ENCODE measurements at regions of chr1 and their contacts with region 1.

Region 1: GRCh38 chr1:210373885-210374599 is 45.3 kb downstream of the HHAT start:
- DNase-seq: peak; percentile 98
- ATAC-seq: peak; percentile 87
- H3K4me3 ChIP-seq: peak overlapping the region in 2 of 3 experiments; percentile 11 to 49; a peak in 1 of 6 replicates
- H3K27ac ChIP-seq: peak overlapping the region; percentile 98
- H3K4me1 ChIP-seq: peaks cover 55% of the 10 kb centered on the region
- H3K27me3 ChIP-seq: no peaks in the 10 kb centered on the region
- CTCF ChIP-seq: peak; percentile 87
- EP300 ChIP-seq: peak; percentile 83 to 91
- POLR2A ChIP-seq: peak; percentile 85 to 100
- RAD21 ChIP-seq: peak; percentile 74

Region 2: GRCh38 chr1:210328746-210329503 is 45.1 kb before region 1 on chr1 and contains the start of gene HHAT:
- CTCF ChIA-PET with region 1: no interaction called
- POLR2A ChIA-PET with region 1: interaction called, 19 read pairs
- in situ Hi-C with region 1: no loop called
- intact Hi-C with region 1: no loop called
- DNase-seq: peak; percentile 49
- ATAC-seq: peak; percentile 94
- H3K4me3 ChIP-seq: peak within 1 kb of the TSS; percentile 69 to 85 (median 73)
- H3K27ac ChIP-seq: peak within 1 kb of the TSS; percentile 73
- H3K4me1 ChIP-seq: peaks cover 19% of the 10 kb centered on the region
- H3K27me3 ChIP-seq: no peaks in the 10 kb centered on the region; a peak in 1 of 5 replicates
- CTCF ChIP-seq: peak; percentile 26; the same call in 1 of the 2 replicates
- EP300 ChIP-seq: no peak
- POLR2A ChIP-seq: peak; percentile 61 to 67
- RAD21 ChIP-seq: no peak
- total RNA-seq, gene HHAT: 2.9 and 4.9 TPM in 2 replicates

Region 3: DNA sequence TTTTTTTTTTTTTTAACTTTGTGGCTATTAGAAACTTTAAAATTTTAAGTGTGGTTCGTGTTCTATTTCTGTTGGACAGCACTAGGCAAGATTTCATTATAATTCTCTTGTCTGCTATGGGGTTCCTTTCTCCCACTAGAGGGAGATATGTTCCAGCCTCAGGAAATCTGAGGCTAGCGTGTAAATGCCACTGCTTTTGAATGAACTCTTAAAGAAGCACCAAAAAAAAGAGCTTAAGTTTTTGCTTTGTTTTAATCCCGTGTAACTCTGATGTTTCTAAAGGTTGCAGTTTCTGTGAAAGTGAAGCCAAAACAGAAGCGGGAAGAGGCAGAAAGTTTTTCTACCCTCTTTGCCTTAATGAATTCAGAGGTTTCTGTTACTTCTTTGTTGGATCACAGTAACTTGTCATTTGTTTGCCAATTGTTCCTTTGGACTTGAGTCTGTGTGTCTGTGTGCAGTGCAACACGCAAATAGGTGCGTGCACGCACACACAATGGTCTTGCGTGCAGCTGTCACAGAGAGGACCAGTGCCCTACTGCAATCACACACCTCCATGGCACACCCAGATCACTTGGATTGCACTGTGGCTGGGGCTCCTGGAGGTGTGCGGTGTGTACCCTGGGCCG is 13.1 kb before region 1 on chr1:
- CTCF ChIA-PET with region 1: interaction called, 10 read pairs
- POLR2A ChIA-PET with region 1: interaction called, 16 read pairs
- in situ Hi-C with region 1: no loop called
- intact Hi-C with region 1: no loop called
- DNase-seq: peak; percentile 52
- ATAC-seq: peak; percentile 93
- H3K4me3 ChIP-seq: peak overlapping the region; percentile 3 to 35 (median 8); a peak in 3 of 6 replicates
- H3K27ac ChIP-seq: no peak overlapping the region
- H3K4me1 ChIP-seq: peaks cover 38% of the 10 kb centered on the region
- H3K27me3 ChIP-seq: no peaks in the 10 kb centered on the region
- CTCF ChIP-seq: peak; percentile 70
- EP300 ChIP-seq: no peak
- POLR2A ChIP-seq: no peak
- RAD21 ChIP-seq: peak; percentile 42; the same call in 1 of the 2 replicates

Region 4: DNA sequence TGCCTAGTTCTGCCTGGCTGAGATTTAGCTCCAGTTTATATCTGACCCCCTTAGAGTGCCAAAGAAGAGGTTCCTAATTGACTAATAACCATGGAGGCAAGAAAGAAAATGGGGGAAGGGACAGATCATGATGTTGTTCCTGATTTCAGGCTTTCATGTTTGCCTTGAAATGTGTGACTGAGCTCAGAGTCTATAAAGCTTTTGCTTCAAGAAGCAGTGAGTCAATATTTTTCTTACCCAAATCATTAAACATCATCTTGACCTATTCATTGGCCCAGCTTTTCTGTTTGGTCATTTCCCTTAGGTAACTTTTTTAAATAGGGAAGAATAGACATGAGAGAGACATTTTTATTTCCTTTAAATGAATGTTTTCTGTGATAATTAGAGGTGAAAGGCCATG is 10.6 kb after region 1 on chr1:
- CTCF ChIA-PET with region 1: no interaction called
- POLR2A ChIA-PET with region 1: interaction called, 53 read pairs
- in situ Hi-C with region 1: no loop called
- intact Hi-C with region 1: no loop called
- DNase-seq: no peak
- ATAC-seq: no peak; the same call in 2 of the 3 replicates
- H3K4me3 ChIP-seq: no peak overlapping the region
- H3K27ac ChIP-seq: peak overlapping the region; percentile 23
- H3K4me1 ChIP-seq: peaks cover 33% of the 10 kb centered on the region
- H3K27me3 ChIP-seq: no peaks in the 10 kb centered on the region
- CTCF ChIP-seq: no peak
- EP300 ChIP-seq: no peak
- POLR2A ChIP-seq: no peak
- RAD21 ChIP-seq: no peak

Region 5: DNA sequence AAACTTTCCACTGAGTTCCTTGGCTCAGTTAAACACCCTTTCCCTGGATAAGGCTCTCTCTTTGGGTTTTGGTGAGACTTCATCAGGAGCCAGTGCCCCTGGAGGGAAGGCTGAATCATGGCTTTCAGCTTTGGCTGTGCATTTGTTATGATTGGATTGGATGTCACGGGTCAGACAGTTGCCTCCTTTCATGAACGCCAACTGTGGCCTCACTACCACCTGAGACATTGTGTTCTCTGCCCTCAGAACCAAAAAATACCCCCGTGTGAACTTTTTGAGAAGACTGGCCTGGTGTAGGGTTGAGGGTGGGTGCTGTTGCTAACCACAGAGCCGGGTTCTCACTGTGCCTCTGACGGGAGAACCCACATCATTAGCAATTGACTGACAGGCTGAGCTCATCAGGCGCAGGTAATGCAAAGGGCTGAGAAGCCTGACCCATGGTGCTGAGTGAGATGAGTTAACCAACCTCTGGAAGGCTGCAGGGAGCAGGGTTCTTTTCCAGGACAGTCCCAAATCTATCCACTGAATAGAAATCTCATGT is 20.3 kb after region 1 on chr1:
- CTCF ChIA-PET with region 1: interaction called, 31 read pairs
- POLR2A ChIA-PET with region 1: interaction called, 21 read pairs
- in situ Hi-C with region 1: no loop called
- intact Hi-C with region 1: loop called (anchors 1 kb)
- DNase-seq: no peak
- ATAC-seq: no peak
- H3K4me3 ChIP-seq: no peak overlapping the region
- H3K27ac ChIP-seq: no peak overlapping the region
- H3K4me1 ChIP-seq: peaks cover 29% of the 10 kb centered on the region
- H3K27me3 ChIP-seq: no peaks in the 10 kb centered on the region
- CTCF ChIP-seq: no peak
- EP300 ChIP-seq: no peak
- POLR2A ChIP-seq: no peak
- RAD21 ChIP-seq: no peak

Region 6: DNA sequence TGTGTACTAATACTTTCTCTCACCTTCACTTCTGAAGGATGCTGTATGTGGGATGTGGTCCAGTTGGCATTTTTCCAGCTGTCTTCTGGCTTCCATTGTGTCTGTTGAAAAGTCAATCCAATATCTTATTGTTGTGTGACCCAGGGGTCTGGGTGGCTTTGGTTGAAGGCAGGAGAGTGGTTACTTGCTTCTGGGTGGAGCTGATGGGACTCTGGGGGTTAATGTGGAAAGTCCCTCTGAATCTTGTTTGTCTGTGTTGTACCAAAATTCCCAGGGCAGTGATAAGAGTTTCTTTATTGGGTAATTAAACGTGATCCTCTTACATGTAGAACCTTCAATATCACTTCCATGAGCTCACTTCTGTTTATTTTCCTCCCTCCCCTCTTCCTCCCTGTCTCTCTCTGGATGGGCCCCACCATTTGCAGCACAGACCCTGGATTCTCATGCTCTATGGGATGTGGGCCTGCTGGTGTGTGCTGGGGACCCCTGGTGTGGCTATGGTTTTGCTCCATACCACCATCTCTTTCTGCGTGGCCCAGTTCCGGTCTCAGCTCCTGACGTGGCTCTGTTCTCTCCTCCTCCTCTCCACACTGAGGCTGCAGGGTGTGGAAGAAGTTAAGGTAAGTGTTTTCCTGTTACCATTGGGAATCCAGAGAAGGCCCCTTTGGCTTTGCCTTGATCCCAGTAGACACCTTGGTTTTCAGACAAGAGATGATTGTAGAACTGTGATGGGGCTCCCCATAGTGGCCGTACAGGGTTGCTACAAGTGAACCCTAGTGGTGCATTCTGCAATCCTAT is 26.2 kb after region 1 on chr1:
- CTCF ChIA-PET with region 1: interaction called, 31 read pairs
- POLR2A ChIA-PET with region 1: interaction called, 4 read pairs
- in situ Hi-C with region 1: no loop called
- intact Hi-C with region 1: loop called (anchors 1 kb)
- DNase-seq: peak; percentile 65
- ATAC-seq: peak; percentile 99
- H3K4me3 ChIP-seq: no peak overlapping the region
- H3K27ac ChIP-seq: no peak overlapping the region
- H3K4me1 ChIP-seq: peaks cover 7% of the 10 kb centered on the region
- H3K27me3 ChIP-seq: no peaks in the 10 kb centered on the region
- CTCF ChIP-seq: peak; percentile 91
- EP300 ChIP-seq: no peak
- POLR2A ChIP-seq: no peak
- RAD21 ChIP-seq: peak; percentile 90

Region 7: GRCh38 chr1:211258756-211259637 is 885.0 kb after region 1 on chr1 and contains the start of gene RCOR3:
- CTCF ChIA-PET with region 1: no interaction called
- POLR2A ChIA-PET with region 1: interaction called, 3 read pairs
- in situ Hi-C with region 1: no loop called
- intact Hi-C with region 1: loop called (anchors 5 kb)
- DNase-seq: peak; percentile 82
- ATAC-seq: peak; percentile 79
- H3K4me3 ChIP-seq: peak within 1 kb of the TSS; percentile 93 to 97 (median 94)
- H3K27ac ChIP-seq: peak within 1 kb of the TSS; percentile 98
- H3K4me1 ChIP-seq: peaks cover 26% of the 10 kb centered on the region; the same call in 1 of the 2 replicates
- H3K27me3 ChIP-seq: no peaks in the 10 kb centered on the region; a peak in 1 of 5 replicates
- CTCF ChIP-seq: peak; percentile 85
- EP300 ChIP-seq: peak in 1 of 2 experiments; percentile 57; a peak in 1 of 4 replicates
- POLR2A ChIP-seq: peak; percentile 67 to 71; a peak in 3 of 4 replicates
- RAD21 ChIP-seq: 0 out of 2 replicates have a peak, but pooled peaks have one; percentile 24
- total RNA-seq, gene RCOR3: 9.6 and 16.8 TPM in 2 replicates